Body of pancreas (tissue), 4 donors: ENCODE measurements at regions of chr1 and their contacts with region 1.

Region 1: DNA sequence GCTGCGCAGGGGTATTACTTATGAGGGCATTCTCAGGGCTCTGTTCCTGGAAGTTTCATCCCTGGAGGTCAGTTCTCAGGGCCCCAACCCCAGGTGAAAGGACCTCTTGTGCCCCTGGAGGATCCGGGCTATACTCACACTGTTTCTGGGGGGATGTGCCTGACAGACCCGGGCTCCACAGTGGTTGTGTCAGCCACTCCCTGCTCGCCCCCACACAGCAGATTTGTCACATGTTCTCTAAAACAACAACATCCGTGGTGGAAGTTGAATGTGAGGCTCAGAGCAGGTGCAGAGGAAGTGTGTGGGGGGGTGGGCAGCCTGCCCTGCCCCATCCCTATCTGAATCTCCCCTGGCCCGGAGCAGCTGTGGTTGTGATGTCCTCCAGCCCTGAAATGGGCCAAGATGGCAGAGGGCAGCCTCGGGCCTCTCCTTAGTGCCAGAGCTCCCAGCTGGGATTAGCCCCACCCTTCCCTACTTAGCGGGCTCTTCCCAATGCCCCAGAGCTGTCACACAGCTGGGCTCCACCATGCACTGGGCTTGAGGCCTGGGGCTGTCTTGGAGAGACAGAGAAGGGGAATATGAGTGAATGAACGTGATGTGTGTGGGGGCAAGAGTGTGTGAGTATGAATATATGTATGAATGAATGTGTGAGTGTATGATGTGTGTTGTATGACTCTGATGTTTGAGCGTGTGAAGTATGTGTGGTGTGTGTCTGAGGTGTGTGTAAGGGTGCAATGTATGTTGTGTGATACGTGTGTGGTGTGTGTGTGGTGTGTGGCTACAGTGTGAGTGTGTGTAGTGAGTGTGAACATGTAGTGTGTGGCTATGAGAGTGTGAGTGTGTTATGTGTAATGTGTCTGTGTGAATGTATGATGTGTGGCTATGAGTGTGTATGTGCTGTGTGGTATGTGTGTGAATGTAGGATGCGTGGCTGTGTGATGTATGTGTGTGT is 1.5 kb upstream of the FCMR start:
- DNase-seq: peak in 2 of 4 donors; percentile 13 to 40
- ATAC-seq: no peak
- H3K4me3 ChIP-seq: no peak overlapping the region
- H3K27ac ChIP-seq: no peak overlapping the region
- H3K4me1 ChIP-seq: no peaks in the 10 kb centered on the region
- H3K27me3 ChIP-seq: no peaks in the 10 kb centered on the region
- CTCF ChIP-seq: no peak
- POLR2A ChIP-seq: no peak

Region 2: DNA sequence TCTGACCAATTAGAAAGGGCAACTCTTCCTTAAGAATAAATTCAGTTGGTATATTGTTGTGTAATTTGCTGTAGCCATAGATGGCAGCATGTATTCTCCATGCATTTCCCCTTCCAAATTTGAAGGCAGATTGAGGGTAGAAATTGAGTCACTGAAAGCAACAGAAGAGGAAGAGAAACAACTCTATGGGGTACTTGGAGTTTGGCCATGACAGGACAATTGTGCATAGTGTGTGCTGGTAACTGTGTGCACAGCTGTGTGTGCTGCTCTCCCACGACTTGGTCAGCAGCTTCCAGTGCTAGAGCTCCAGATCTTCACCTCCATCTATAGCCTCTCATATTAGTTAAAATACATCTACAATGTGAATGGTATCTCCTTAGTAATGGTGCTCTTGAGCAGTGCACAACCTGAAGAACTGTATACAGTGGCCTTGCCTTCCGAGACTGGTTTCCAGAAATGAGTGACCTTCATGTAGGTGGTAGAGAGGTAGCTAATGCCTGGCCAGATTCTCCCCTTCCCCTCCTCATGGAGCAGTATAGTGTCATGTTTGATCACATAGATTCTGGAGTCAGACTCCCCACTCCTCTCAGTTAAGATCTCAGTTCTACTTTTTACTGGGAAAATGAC is 47.9 kb after region 1 on chr1:
- intact Hi-C with region 1: loop called (anchors 5 kb)
- DNase-seq: peak in 1 of 4 donors; percentile 20
- ATAC-seq: no peak
- H3K4me3 ChIP-seq: no peak overlapping the region
- H3K27ac ChIP-seq: no peak overlapping the region
- H3K4me1 ChIP-seq: peaks cover 16% of the 10 kb centered on the region
- H3K27me3 ChIP-seq: no peaks in the 10 kb centered on the region
- CTCF ChIP-seq: no peak
- POLR2A ChIP-seq: no peak